ENCODE measurements at regions of chrX and their contacts with region 1.

Region 1: DNA sequence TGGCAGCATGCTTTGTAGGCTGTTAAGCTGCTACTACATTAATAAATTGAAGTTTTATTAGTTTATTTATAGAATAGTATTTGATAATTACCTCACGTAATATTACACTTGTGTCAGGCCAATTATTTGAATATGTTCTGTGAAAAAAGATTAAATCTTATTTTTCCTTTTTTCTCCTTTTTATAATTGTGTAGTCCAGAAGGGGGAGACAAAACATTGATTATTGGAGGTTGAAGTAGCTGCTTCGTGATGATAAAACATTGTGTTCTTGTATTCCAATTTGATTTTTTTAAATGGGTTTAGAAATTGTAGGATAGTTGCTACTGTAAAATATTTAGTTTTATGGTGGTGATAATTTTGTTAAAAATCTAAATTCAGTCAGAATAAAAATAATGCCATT is 85.7 kb downstream of the DIAPH2 start:
- DNase-seq: no peak
- ATAC-seq: no peak
- H3K4me3 Mint-ChIP-seq: no peak overlapping the region
- H3K27ac Mint-ChIP-seq: no peak overlapping the region
- H3K4me1 Mint-ChIP-seq: no peaks in the 10 kb centered on the region
- H3K27me3 Mint-ChIP-seq: no peaks in the 10 kb centered on the region
- CTCF ChIP-seq: no peak

Region 2: GRCh38 chrX:96835660-96836289 is 65.5 kb after region 1 on chrX:
- CTCF ChIA-PET with region 1: no interaction called
- POLR2A ChIA-PET with region 1: no interaction called
- intact Hi-C with region 1: loop called (anchors 2 kb)
- DNase-seq: peak; percentile 24
- ATAC-seq: peak; percentile 87
- H3K4me3 Mint-ChIP-seq: peak overlapping the region; percentile 57
- H3K27ac Mint-ChIP-seq: peak overlapping the region; percentile 88
- H3K4me1 Mint-ChIP-seq: peaks cover 23% of the 10 kb centered on the region
- H3K27me3 Mint-ChIP-seq: no peaks in the 10 kb centered on the region
- CTCF ChIP-seq: no peak

Region 3: GRCh38 chrX:97563531-97564133 is 793.3 kb after region 1 on chrX:
- CTCF ChIA-PET with region 1: no interaction called
- POLR2A ChIA-PET with region 1: no interaction called
- intact Hi-C with region 1: loop called (anchors 10 kb)
- DNase-seq: peak; percentile 15
- ATAC-seq: peak; percentile 97
- H3K4me3 Mint-ChIP-seq: peak overlapping the region; percentile 77
- H3K27ac Mint-ChIP-seq: peak overlapping the region; percentile 84
- H3K4me1 Mint-ChIP-seq: peaks cover 10% of the 10 kb centered on the region
- H3K27me3 Mint-ChIP-seq: no peaks in the 10 kb centered on the region
- CTCF ChIP-seq: no peak

Region 4: GRCh38 chrX:97685753-97686152 is 915.4 kb after region 1 on chrX:
- CTCF ChIA-PET with region 1: interaction called, 13 read pairs
- POLR2A ChIA-PET with region 1: no interaction called
- intact Hi-C with region 1: loop called (anchors 1 kb)
- DNase-seq: no peak
- ATAC-seq: no peak
- H3K4me3 Mint-ChIP-seq: no peak overlapping the region
- H3K27ac Mint-ChIP-seq: no peak overlapping the region
- H3K4me1 Mint-ChIP-seq: no peaks in the 10 kb centered on the region
- H3K27me3 Mint-ChIP-seq: no peaks in the 10 kb centered on the region
- CTCF ChIP-seq: no peak

Region 5: GRCh38 chrX:97743014-97743413 is 972.7 kb after region 1 on chrX:
- CTCF ChIA-PET with region 1: no interaction called
- POLR2A ChIA-PET with region 1: no interaction called
- intact Hi-C with region 1: loop called (anchors 2 kb)
- DNase-seq: no peak
- ATAC-seq: no peak
- H3K4me3 Mint-ChIP-seq: no peak overlapping the region
- H3K27ac Mint-ChIP-seq: no peak overlapping the region
- H3K4me1 Mint-ChIP-seq: no peaks in the 10 kb centered on the region
- H3K27me3 Mint-ChIP-seq: no peaks in the 10 kb centered on the region
- CTCF ChIP-seq: no peak